Activated T-helper 1 cell treated with anti-CD3 and anti-CD28 coated beads, Interleukin-12 subunit alpha, Interleukin-12 subunit beta, Interleukin-2, Interleukin-4 antibody, amounts not matched to agents 30 ng/mL and 10 ng/mL and 1 ng/mL, durations not matched to agents 14 hours and 24 hours and 36 hours (primary cell): ENCODE measurements at regions of chr17 and their contacts with region 1.

Region 1: GRCh38 chr17:29753845-29754439 is 131.2 kb upstream of the CORO6 start:
- DNase-seq: no peak
- H3K4me3 Mint-ChIP-seq: no peak overlapping the region
- H3K27ac Mint-ChIP-seq: no peak overlapping the region
- H3K4me1 Mint-ChIP-seq: peaks cover 28% of the 10 kb centered on the region
- H3K27me3 Mint-ChIP-seq: no peaks in the 10 kb centered on the region

Region 2: DNA sequence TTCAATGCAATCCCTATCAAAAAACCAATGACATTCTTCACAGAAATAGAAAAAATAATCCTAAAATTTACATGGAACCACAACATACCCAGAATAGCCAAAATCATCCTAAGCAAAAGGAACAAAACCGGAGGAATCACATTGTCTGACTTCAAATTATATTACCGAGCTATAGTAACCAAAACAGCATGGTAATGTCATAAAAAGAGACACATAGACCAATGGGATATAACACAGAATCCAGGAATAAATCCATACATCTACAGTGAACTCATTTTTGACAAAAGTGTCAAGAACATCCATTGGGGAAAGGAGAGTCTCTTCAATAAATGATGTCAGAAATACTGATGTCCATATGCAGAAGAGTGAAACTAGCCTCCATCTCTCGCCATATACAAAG is 25.5 kb before region 1 on chr17:
- intact Hi-C with region 1: loop called (anchors 2 kb)
- DNase-seq: no peak
- H3K4me3 Mint-ChIP-seq: no peak overlapping the region
- H3K27ac Mint-ChIP-seq: peak overlapping the region; percentile 18
- H3K4me1 Mint-ChIP-seq: peaks cover 57% of the 10 kb centered on the region
- H3K27me3 Mint-ChIP-seq: no peaks in the 10 kb centered on the region